Naive thymus-derived CD4-positive, alpha-beta T cell (primary cell): ENCODE measurements at regions of chr2 and their contacts with region 1.

Region 1: DNA sequence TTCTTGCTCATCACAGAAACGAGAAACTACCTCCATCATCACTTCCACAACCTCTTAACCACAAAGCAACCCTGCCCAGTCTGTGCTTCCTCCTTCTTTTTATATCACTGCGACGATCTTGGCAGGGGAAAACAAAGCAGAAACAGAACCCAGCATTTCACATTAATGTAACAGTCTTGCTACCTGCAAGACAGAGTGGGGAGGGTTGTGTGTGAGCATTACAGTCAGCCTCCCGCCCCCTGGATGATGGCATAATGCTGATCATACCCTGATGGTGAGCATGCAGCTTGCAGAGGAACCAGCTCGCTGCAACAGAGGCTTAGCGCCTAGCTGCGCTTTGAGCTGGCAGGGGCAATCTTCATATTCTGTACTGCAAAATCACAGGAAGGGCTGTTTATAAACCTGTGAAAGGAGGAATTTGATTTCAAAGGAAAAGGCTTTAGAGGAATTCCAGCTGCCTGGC is 376.1 kb downstream of the IRS1 start:
- DNase-seq: peak; percentile 16 to 58 (median 45)
- ATAC-seq: peak; percentile 91
- H3K4me3 ChIP-seq: peak overlapping the region; percentile 33
- H3K4me3 Mint-ChIP-seq: peak overlapping the region; percentile 67 to 91 (median 75)
- H3K27ac ChIP-seq: no peak overlapping the region
- H3K27ac Mint-ChIP-seq: peak overlapping the region; percentile 2 to 89 (median 26)
- H3K4me1 ChIP-seq: peaks cover 6 to 9% of the 10 kb centered on the region in 2 donors
- H3K4me1 Mint-ChIP-seq: peaks cover 11 to 22% (median 13%) of the 10 kb centered on the region in 7 donors
- H3K27me3 ChIP-seq: no peaks in the 10 kb centered on the region
- H3K27me3 Mint-ChIP-seq: peaks cover 0 to 29% (median 0%) of the 10 kb centered on the region in 5 donors

Region 2: GRCh38 chr2:225820826-225821225 is 602.7 kb before region 1 on chr2:
- CTCF ChIA-PET with region 1: no interaction called
- POLR2A ChIA-PET with region 1: no interaction called
- intact Hi-C with region 1: no loop called
- DNase-seq: no peak
- ATAC-seq: no peak
- H3K4me3 ChIP-seq: no peak overlapping the region
- H3K4me3 Mint-ChIP-seq: no peak overlapping the region
- H3K27ac ChIP-seq: no peak overlapping the region
- H3K27ac Mint-ChIP-seq: no peak overlapping the region
- H3K4me1 ChIP-seq: no peaks in the 10 kb centered on the region
- H3K4me1 Mint-ChIP-seq: no peaks in the 10 kb centered on the region
- H3K27me3 ChIP-seq: no peaks in the 10 kb centered on the region
- H3K27me3 Mint-ChIP-seq: peaks cover 0 to 20% (median 5%) of the 10 kb centered on the region in 5 donors

Region 3: DNA sequence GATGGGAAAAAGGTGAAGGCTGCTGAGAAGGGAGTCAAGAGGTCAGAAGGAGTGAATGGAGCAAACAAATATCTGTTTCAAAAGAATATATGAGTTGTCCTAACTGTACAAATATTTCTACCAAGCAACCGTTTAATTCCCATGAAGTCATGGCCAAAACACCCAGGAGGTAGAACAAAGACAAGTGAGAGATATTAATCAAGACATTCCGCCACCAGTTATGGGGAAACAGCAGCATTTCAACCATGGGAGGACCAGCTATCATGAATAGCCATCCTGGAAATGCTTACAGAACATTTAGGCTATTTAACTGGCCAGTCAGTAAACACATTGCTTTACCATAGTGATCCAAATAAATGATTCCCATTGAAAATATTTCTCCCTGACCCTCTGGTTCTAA is 20.2 kb before region 1 on chr2:
- CTCF ChIA-PET with region 1: no interaction called
- POLR2A ChIA-PET with region 1: no interaction called
- intact Hi-C with region 1: no loop called
- DNase-seq: no peak
- ATAC-seq: no peak
- H3K4me3 ChIP-seq: no peak overlapping the region
- H3K4me3 Mint-ChIP-seq: no peak overlapping the region
- H3K27ac ChIP-seq: no peak overlapping the region
- H3K27ac Mint-ChIP-seq: no peak overlapping the region
- H3K4me1 ChIP-seq: no peaks in the 10 kb centered on the region
- H3K4me1 Mint-ChIP-seq: peaks cover 0 to 6% (median 0%) of the 10 kb centered on the region in 7 donors
- H3K27me3 ChIP-seq: no peaks in the 10 kb centered on the region
- H3K27me3 Mint-ChIP-seq: peaks cover 18 to 38% (median 19%) of the 10 kb centered on the region in 5 donors

Region 4: DNA sequence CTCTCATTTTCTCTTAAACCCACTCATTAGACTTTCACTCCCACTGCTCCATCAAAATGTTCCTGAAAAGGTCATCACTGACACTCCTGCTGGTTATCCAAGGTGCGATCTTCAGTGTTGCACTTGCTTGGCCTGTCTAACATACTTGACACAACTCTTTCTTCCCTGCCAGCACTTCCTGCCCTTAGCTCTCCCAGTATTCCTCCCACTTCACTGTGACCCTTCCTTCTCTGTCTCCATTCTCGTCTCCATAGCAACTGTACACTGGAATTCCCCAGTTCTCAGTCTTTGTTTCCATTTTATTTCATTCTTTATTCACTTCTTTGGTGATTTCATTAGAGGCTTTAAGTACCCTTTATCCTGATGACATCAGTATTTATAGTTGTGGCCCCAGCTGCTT is 43.0 kb after region 1 on chr2:
- CTCF ChIA-PET with region 1: no interaction called
- POLR2A ChIA-PET with region 1: no interaction called
- intact Hi-C with region 1: no loop called
- DNase-seq: no peak
- ATAC-seq: no peak
- H3K4me3 ChIP-seq: no peak overlapping the region
- H3K4me3 Mint-ChIP-seq: no peak overlapping the region
- H3K27ac ChIP-seq: no peak overlapping the region
- H3K27ac Mint-ChIP-seq: no peak overlapping the region
- H3K4me1 ChIP-seq: no peaks in the 10 kb centered on the region
- H3K4me1 Mint-ChIP-seq: no peaks in the 10 kb centered on the region
- H3K27me3 ChIP-seq: no peaks in the 10 kb centered on the region
- H3K27me3 Mint-ChIP-seq: peaks cover 0 to 14% (median 0%) of the 10 kb centered on the region in 5 donors

Region 5: GRCh38 chr2:226772389-226773179 is 349.1 kb after region 1 on chr2:
- CTCF ChIA-PET with region 1: no interaction called
- POLR2A ChIA-PET with region 1: no interaction called
- intact Hi-C with region 1: loop called in 1 of 2 experiments (anchors 1 kb)
- DNase-seq: peak in 3 of 9 donors; percentile 14 to 26 (median 23)
- ATAC-seq: peak; percentile 80
- H3K4me3 ChIP-seq: peak overlapping the region; percentile 2
- H3K4me3 Mint-ChIP-seq: peak overlapping the region; percentile 27 to 83 (median 76)
- H3K27ac ChIP-seq: no peak overlapping the region
- H3K27ac Mint-ChIP-seq: peak overlapping the region in 8 of 9 donors; percentile 5 to 80 (median 38)
- H3K4me1 ChIP-seq: peaks cover 16 to 19% of the 10 kb centered on the region in 2 donors
- H3K4me1 Mint-ChIP-seq: peaks cover 18 to 30% (median 29%) of the 10 kb centered on the region in 7 donors
- H3K27me3 ChIP-seq: no peaks in the 10 kb centered on the region
- H3K27me3 Mint-ChIP-seq: no peaks in the 10 kb centered on the region